ENCODE measurements at regions of chr5 and their contacts with region 1.

Region 1: DNA sequence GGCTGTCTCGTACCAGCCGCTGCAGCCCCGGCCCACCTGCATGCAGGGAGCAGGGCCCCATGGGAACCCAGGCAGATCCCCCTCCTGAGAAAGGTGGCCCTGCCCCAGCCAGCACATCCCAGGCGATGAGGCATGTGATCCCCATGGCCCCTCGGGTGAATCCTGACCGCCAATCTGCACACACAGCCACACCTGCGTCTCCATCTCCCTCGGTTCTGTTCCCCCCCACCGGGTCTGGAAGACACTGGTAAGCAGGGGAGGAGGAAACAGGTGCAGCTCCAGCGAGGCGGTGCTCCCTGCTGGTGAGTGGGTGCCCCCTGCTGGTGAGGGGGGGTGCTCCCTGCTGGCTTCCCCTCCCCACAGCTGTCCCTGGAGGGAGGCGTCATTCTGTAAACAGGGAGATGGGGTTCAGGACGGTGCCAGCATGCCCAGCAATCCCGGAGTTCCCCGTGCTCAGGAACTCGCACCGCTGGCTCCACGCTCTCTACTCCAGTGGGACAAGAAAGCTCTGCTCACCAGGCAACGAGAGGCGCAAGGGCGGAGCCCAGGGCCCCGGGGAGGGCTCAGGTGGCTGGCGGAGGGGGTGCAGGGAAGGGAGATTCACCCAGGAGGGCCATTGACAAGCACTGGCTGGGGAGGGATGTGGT is 28.4 kb upstream of the SLC12A7 start:
- DNase-seq: peak; percentile 83
- ATAC-seq: peak; percentile 84 to 86

Region 2: GRCh38 chr5:923281-923873 is 216.9 kb before region 1 on chr5:
- intact Hi-C with region 1: loop called in 1 of 2 experiments (anchors 10 kb)
- DNase-seq: peak; percentile 89
- ATAC-seq: peak; percentile 88 to 91

Region 3: DNA sequence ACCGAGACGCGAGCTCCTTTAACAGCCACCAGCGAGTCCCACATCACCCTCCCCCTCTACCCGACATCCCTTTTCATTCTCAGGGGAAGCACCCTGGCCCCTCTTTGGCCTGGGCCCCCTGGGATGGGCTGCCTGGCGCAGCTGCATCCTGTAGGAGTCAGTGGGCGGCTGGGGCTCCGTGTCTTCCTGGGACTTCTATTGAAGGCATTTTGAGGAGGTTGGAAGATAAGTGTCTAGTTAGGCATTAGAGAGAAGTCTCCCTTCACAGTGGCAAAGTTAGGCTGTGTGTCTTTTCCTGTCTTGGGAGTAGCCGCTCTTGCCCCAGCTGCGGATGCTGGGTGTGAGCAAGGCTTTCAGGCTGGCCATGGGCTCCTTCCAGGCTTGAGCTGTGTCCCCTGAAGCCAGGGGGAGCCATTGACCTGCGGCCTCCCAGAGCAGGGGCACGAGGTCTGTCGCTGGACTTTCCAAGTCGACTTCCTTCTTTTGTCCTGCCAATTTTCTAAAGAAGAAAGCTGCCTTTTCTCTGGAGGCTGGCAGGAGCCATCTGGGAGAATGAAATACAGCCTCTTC is 150.2 kb before region 1 on chr5:
- intact Hi-C with region 1: loop called in 1 of 2 experiments (anchors 5 kb)
- DNase-seq: peak; percentile 83
- ATAC-seq: peak; percentile 67 to 68

Region 4: GRCh38 chr5:1004461-1005248 is 135.6 kb before region 1 on chr5:
- intact Hi-C with region 1: loop called in 1 of 2 experiments (anchors 5 kb)
- DNase-seq: peak; percentile 90
- ATAC-seq: peak; percentile 80 to 84

Region 5: GRCh38 chr5:1011226-1011631 is 129.1 kb before region 1 on chr5:
- intact Hi-C with region 1: loop called (anchors 5 kb)
- DNase-seq: peak; percentile 20
- ATAC-seq: no peak

Region 6: GRCh38 chr5:1090538-1090937 is 49.8 kb before region 1 on chr5:
- intact Hi-C with region 1: loop called in 1 of 2 experiments (anchors 5 kb)
- DNase-seq: no peak
- ATAC-seq: peak; percentile 27 to 34